SK-N-SH (cell line): ENCODE measurements at regions of chr17 and their contacts with region 1.

Region 1: DNA sequence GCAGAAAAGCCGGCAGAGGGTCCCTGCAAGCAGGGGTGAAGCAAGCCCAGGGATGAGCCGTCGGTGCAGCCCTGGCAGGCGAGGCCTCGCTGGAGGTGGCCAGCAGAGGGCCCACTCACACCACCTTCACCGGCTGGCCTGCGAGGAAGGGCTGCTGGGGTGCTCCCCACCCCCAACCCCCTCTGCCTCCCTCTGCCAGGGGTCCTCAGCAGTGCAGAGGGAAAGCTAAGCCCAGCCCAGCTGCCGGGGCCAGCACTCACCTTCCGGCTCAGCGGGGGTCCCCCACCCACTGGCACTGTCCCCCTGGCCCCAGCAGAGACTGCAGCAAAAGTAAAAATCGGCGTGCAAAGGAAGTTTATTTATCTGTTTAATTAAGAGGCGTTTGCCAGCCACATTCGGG is 113.4 kb downstream of the ENGASE start:
- DNase-seq: peak; percentile 97
- H3K4me3 ChIP-seq: no peak overlapping the region
- H3K27ac ChIP-seq: no peak overlapping the region
- H3K4me1 ChIP-seq: peaks cover 0 to 3% of the 10 kb centered on the region in 2 experiments; a peak in 1 of 4 replicates
- H3K27me3 ChIP-seq: peaks cover 44% of the 10 kb centered on the region
- CTCF ChIP-seq: peak; percentile 63
- EP300 ChIP-seq: no peak
- RAD21 ChIP-seq: peak; percentile 92

Region 2: GRCh38 chr17:78962345-78962983 is 225.6 kb before region 1 on chr17:
- CTCF ChIA-PET with region 1: no interaction called
- POLR2A ChIA-PET with region 1: no interaction called
- DNase-seq: peak; percentile 39
- H3K4me3 ChIP-seq: no peak overlapping the region
- H3K27ac ChIP-seq: no peak overlapping the region
- H3K4me1 ChIP-seq: peaks cover 0 to 8% of the 10 kb centered on the region in 2 experiments; a peak in 1 of 4 replicates
- H3K27me3 ChIP-seq: no peaks in the 10 kb centered on the region
- CTCF ChIP-seq: no peak
- EP300 ChIP-seq: no peak
- RAD21 ChIP-seq: no peak

Region 3: DNA sequence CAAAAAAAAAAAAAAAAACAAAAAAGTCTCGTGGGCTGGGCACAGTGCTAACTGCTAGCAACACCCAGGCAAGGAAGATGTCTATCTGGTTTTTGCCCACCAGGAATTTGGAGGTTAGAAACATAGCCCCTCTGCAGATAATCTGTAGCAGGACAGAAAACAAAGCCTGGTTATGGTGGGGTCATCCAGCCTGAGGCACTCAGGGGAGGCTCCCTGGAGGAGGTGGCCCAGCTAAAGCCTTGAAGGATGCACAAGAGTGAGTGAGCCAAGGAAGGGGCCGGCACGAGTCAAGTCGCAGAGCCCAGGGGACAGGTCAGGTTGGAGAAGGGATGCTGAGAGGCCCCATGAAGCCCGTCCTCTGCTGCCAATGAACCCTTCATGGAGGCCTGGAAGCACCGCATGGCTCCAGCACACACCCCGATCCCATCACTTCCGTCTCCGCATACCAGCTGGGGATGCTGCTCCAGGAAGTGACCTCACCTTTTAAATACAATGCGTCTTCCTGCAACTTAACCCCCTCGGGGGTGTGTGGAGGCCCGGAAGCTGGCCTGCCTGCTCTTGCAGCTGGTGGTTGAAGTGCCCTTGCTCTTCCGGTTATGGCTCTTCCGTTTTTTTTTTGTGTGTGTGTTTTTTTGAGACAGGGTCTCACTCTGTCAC is 26.9 kb before region 1 on chr17:
- CTCF ChIA-PET with region 1: interaction called, 37 read pairs
- POLR2A ChIA-PET with region 1: no interaction called
- DNase-seq: no peak
- H3K4me3 ChIP-seq: no peak overlapping the region
- H3K27ac ChIP-seq: no peak overlapping the region
- H3K4me1 ChIP-seq: peaks cover 0 to 34% of the 10 kb centered on the region in 2 experiments; a peak in 2 of 4 replicates
- H3K27me3 ChIP-seq: peaks cover 39% of the 10 kb centered on the region
- CTCF ChIP-seq: no peak
- EP300 ChIP-seq: no peak
- RAD21 ChIP-seq: no peak

Region 4: DNA sequence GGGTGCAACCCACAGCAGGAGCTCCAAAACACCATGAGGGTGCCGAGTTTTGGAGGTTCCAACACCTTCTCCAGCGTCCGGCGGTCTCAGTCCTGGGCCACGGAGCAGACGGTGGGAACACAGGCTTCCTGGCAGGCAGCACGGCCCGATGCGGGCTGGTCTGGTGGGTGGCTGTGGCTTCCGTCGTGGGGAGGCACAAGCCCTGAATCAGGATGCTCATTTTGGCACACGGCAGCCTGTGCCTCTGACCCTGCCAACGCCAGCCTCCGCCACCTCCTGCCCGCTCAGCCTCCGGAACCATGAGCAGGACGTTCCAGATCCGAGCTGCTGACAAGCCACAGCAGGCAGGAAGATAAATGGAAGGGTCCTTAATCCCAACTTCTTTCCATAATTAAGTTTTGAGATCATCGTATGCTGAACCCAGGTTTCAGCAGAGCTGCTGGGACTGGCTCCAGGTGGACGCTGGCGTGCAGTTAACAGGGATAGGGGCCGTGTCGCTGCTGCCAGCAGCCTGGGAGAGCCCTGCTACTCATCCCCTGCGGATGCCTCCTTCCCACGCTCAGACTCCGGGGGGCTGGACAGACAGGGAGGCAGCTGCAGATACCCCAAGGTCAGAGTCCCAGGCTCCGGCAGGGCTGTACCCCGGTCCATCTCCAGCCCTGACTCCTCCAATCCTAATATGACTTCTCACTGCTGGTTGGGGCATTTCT is 23.2 kb after region 1 on chr17:
- CTCF ChIA-PET with region 1: interaction called, 157 read pairs
- POLR2A ChIA-PET with region 1: interaction called, 3 read pairs
- DNase-seq: no peak
- H3K4me3 ChIP-seq: no peak overlapping the region
- H3K27ac ChIP-seq: no peak overlapping the region
- H3K4me1 ChIP-seq: peaks cover 0 to 36% of the 10 kb centered on the region in 2 experiments; a peak in 1 of 4 replicates
- H3K27me3 ChIP-seq: peaks cover 40% of the 10 kb centered on the region
- CTCF ChIP-seq: no peak
- EP300 ChIP-seq: no peak
- RAD21 ChIP-seq: no peak

Region 5: DNA sequence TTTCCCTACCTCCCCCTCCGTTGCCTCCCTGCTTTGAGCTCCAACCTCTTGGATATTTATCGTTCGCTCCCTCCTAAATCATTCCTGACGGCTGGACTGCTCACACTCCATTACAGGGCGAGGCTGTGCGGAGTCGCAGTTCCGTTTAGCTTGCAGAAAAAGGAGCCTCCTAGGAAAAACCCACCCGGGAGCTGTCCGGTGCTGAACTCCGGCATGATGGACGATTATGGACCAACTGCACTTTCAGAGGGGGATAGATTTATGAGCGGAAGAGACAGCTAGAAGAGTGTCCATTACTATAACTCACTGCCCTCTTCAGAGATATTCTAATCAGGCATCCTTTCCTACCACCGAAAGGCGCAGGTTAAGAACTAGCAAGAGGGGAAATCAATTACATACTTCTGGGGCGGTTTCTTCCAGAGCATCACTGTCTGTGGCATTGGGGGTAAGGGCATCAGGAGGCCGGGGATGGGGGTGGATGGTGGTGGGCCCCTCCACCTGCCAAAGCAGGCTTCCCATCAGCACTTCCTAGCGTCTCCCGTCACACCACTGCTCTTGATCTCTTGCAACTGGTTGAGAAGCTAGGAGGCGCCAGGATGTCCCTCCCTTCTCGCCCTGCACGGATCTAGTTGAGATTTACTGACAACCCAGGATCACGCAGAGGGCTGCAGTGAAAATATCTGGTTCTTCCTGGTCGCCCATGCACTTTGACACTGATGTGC is 137.8 kb after region 1 on chr17:
- CTCF ChIA-PET with region 1: interaction called, 20 read pairs
- POLR2A ChIA-PET with region 1: no interaction called
- DNase-seq: no peak
- H3K4me3 ChIP-seq: no peak overlapping the region
- H3K27ac ChIP-seq: no peak overlapping the region
- H3K4me1 ChIP-seq: no peaks in the 10 kb centered on the region; a peak in 1 of 4 replicates
- H3K27me3 ChIP-seq: no peaks in the 10 kb centered on the region
- CTCF ChIP-seq: no peak
- EP300 ChIP-seq: no peak
- RAD21 ChIP-seq: no peak

Region 6: GRCh38 chr17:79400989-79401703 is 213.1 kb after region 1 on chr17:
- CTCF ChIA-PET with region 1: interaction called, 1,340 read pairs
- POLR2A ChIA-PET with region 1: no interaction called
- DNase-seq: peak; percentile 94
- H3K4me3 ChIP-seq: peak overlapping the region; percentile 34 to 55
- H3K27ac ChIP-seq: no peak overlapping the region
- H3K4me1 ChIP-seq: peaks cover 0 to 8% of the 10 kb centered on the region in 2 experiments; a peak in 1 of 4 replicates
- H3K27me3 ChIP-seq: peaks cover 55% of the 10 kb centered on the region
- CTCF ChIP-seq: peak; percentile 97
- EP300 ChIP-seq: no peak
- RAD21 ChIP-seq: peak; percentile 67